ENCODE measurements at regions of chr12 and their contacts with region 1.

Region 1: GRCh38 chr12:121033625-121034349 is 5.3 kb downstream of the OASL start:
- DNase-seq: peak; percentile 63
- H3K4me3 Mint-ChIP-seq: peak overlapping the region; percentile 55
- H3K27ac Mint-ChIP-seq: peak overlapping the region; percentile 89
- H3K4me1 Mint-ChIP-seq: peaks cover 54% of the 10 kb centered on the region
- H3K27me3 Mint-ChIP-seq: no peaks in the 10 kb centered on the region

Region 2: DNA sequence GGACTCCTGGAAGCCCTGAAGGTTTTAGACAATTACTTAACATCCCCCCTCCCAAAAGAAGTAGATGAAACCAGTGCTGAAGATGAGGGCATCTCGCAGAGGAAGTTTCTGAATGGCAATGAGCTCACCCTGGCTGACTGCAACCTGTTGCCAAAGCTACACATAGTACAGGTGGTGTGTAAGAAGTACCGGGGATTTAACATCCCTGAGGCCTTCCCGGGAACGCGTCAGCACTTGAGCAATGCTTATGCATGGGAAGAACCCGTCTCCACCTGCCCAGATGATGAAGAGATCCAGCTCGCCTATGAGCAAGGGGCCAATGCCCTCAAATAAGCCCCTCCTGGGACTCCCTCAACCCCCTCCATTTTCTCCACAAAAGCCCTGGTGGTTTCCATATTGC is 119.0 kb before region 1 on chr12:
- CTCF ChIA-PET with region 1: no interaction called
- POLR2A ChIA-PET with region 1: no interaction called
- DNase-seq: no peak
- H3K4me3 Mint-ChIP-seq: no peak overlapping the region
- H3K27ac Mint-ChIP-seq: no peak overlapping the region
- H3K4me1 Mint-ChIP-seq: no peaks in the 10 kb centered on the region
- H3K27me3 Mint-ChIP-seq: peaks cover 2% of the 10 kb centered on the region

Region 3: GRCh38 chr12:121017966-121018491 is 15.8 kb before region 1 on chr12:
- CTCF ChIA-PET with region 1: interaction called, 10 read pairs
- POLR2A ChIA-PET with region 1: interaction called, 6 read pairs
- DNase-seq: no peak
- H3K4me3 Mint-ChIP-seq: no peak overlapping the region
- H3K27ac Mint-ChIP-seq: no peak overlapping the region
- H3K4me1 Mint-ChIP-seq: peaks cover 25% of the 10 kb centered on the region
- H3K27me3 Mint-ChIP-seq: no peaks in the 10 kb centered on the region